ENCODE measurements at regions of chr11 and their contacts with region 1.

Region 1: GRCh38 chr11:16605894-16606783 is 132.3 kb upstream of the C11orf58 start:
- DNase-seq: peak; percentile 92 to 94
- ATAC-seq: peak; percentile 63 to 69 (median 68)
- H3K4me3 ChIP-seq: peak overlapping the region; percentile 97
- H3K27ac ChIP-seq: peak overlapping the region; percentile 98
- H3K4me1 ChIP-seq: peaks cover 7% of the 10 kb centered on the region
- H3K27me3 ChIP-seq: no peaks in the 10 kb centered on the region
- CTCF ChIP-seq: peak; percentile 99

Region 2: DNA sequence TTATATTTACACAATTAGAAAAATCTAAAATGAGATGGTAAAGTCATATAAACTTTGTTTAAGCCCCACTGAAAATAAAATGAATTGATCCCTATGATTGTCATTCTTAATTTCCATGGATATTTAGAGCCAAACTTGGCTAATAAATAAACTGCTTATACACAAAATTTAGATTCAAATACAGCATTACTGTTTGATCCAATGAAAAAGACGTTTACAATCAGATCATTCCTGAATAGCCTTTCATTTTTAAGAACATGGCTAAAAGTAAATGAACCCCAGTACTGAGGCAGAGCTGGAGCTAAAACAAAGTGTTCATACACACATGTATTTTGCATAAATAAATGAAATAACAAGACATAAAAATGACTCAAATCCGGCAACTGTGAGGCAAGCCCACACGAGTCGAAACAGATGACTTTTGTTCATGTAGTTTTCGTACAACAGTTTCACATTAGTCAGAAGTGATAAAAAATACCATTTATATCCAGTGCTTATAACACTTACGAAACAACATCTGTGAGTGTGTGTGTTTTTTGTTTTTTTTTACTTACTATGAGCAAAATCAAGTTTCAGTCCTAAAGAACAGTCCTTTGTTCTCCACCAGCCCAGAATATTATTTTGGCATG is 636.3 kb before region 1 on chr11:
- intact Hi-C with region 1: loop called in 1 of 2 experiments (anchors 5 kb)
- DNase-seq: no peak
- ATAC-seq: no peak
- H3K4me3 ChIP-seq: peak overlapping the region; percentile 55
- H3K27ac ChIP-seq: peak overlapping the region; percentile 95
- H3K4me1 ChIP-seq: peaks cover 53% of the 10 kb centered on the region
- H3K27me3 ChIP-seq: no peaks in the 10 kb centered on the region
- CTCF ChIP-seq: no peak

Region 3: GRCh38 chr11:16184588-16184987 is 421.6 kb before region 1 on chr11:
- intact Hi-C with region 1: loop called (anchors 2 to 5 kb)
- DNase-seq: no peak
- ATAC-seq: peak; percentile 62 to 88 (median 81)
- H3K4me3 ChIP-seq: no peak overlapping the region
- H3K27ac ChIP-seq: peak overlapping the region; percentile 83
- H3K4me1 ChIP-seq: peaks cover 32% of the 10 kb centered on the region
- H3K27me3 ChIP-seq: no peaks in the 10 kb centered on the region
- CTCF ChIP-seq: no peak

Region 4: DNA sequence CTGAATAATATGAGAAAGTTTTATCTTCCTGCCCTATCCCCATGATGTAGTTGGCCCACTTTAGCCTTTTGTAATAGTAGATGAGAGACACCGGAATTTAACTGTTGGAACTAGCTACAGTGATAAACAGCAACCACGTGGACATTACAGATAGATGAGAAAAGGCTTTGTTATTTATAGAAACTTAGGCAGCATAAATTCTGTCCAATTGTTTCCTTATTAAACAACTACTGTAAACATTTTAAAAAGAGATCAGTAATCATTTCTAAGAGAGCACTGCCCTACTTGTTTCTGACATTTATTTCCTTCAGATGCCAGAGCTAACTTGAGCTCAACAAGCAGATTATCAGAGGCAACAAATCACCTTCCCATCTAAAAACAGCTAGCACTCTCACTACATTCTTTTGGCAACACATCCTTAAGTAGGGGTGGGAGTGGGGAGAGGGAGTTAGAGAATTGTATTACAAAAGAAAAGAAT is 312.9 kb before region 1 on chr11:
- intact Hi-C with region 1: loop called (anchors 1 to 10 kb)
- DNase-seq: no peak
- ATAC-seq: peak; percentile 72 to 89 (median 81)
- H3K4me3 ChIP-seq: peak overlapping the region; percentile 35
- H3K27ac ChIP-seq: peak overlapping the region; percentile 84
- H3K4me1 ChIP-seq: peaks cover 65% of the 10 kb centered on the region
- H3K27me3 ChIP-seq: no peaks in the 10 kb centered on the region
- CTCF ChIP-seq: no peak

Region 5: GRCh38 chr11:16347928-16348685 is 258.0 kb before region 1 on chr11:
- intact Hi-C with region 1: loop called (anchors 1 to 5 kb)
- DNase-seq: no peak
- ATAC-seq: peak; percentile 77 to 92 (median 87)
- H3K4me3 ChIP-seq: peak overlapping the region; percentile 45
- H3K27ac ChIP-seq: peak overlapping the region; percentile 83
- H3K4me1 ChIP-seq: peaks cover 37% of the 10 kb centered on the region
- H3K27me3 ChIP-seq: no peaks in the 10 kb centered on the region
- CTCF ChIP-seq: no peak

Region 6: DNA sequence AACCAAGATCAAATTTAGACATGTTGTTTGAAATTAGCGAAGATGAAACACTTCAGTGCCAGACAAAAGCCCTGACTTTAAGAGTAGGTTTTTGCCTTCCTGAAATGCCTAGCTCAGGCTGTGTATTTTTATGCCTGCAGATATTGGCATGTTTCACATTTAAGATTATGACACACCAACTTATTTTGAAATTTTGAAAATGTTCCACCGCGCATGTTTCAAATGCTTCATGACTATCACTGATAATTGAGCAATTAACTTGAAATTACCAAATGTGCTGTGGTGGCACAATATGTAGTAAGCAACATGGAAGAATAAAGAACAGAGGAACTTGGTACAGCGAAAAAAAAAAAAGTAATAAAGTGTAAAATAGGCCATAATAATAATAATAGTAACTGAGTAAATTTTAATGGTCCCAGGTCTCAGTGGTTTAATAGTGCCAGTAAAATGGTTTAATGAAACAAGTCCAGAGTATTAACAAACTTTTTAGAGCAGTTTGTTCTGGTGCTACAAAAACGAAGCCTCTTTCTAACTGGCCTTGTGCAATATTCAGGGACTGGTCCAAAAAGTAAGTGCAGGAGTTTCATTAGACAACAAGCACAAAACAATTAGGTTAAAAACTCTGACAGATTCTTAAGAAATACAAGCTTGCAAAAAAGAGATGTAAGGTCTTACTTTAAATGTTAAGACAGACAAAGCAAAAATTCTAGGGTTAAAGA is 137.2 kb before region 1 on chr11:
- intact Hi-C with region 1: loop called in 1 of 2 experiments (anchors 10 kb)
- DNase-seq: no peak
- ATAC-seq: peak; percentile 38 to 86 (median 60)
- H3K4me3 ChIP-seq: peak overlapping the region; percentile 8
- H3K27ac ChIP-seq: peak overlapping the region; percentile 57
- H3K4me1 ChIP-seq: peaks cover 36% of the 10 kb centered on the region
- H3K27me3 ChIP-seq: no peaks in the 10 kb centered on the region
- CTCF ChIP-seq: no peak

Region 7: DNA sequence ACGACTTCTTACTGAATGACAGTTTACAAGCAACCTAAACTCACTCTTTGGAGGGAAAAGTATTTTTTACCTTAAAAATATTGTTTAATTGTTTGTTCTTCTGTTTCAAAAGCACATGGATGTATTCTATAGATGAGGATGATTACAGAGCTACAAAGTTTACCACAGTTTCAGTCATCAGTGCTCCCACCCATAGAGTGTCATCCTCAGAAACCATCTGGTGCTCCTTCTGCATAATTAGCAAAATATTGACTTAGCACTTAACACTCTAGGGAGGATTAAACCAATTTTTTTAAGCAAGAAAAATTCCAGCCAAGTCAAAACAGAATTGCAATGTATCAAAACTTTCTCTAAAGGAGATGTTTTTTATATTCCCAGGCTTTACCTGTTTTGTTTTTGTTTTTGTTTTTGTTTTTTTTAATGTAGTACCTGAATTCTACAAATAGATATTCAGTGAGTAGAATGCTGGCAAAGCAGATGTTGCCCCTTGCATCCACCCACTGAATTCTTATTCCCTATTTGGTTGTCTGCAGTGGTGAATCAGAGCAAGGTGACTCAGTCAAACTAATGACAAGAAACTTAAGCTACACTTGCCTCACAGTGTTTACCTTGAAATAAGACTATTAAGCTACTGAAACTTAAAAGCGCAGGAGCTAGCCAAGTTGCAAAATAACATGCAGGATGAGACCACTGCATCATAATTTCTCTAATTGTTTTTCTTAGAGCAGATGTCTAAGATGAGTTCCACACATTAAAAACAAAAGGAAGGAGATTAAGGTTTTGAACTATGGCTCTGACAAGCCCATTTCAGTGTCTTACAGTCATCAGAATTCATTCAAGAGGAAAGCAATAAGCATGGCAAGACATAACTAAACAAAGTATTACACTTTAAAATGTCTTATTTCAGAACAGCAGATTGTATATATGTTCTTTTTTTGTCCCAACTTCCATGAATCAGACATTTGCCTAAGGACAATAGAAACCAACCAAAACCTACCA is 94.7 kb before region 1 on chr11:
- intact Hi-C with region 1: loop called in 1 of 2 experiments (anchors 5 kb)
- DNase-seq: no peak
- ATAC-seq: peak; percentile 83 to 93 (median 90)
- H3K4me3 ChIP-seq: no peak overlapping the region
- H3K27ac ChIP-seq: peak overlapping the region; percentile 82
- H3K4me1 ChIP-seq: peaks cover 39% of the 10 kb centered on the region
- H3K27me3 ChIP-seq: no peaks in the 10 kb centered on the region
- CTCF ChIP-seq: no peak

Region 8: GRCh38 chr11:16561150-16561549 is 45.0 kb before region 1 on chr11:
- intact Hi-C with region 1: no loop called
- DNase-seq: no peak
- ATAC-seq: no peak
- H3K4me3 ChIP-seq: no peak overlapping the region
- H3K27ac ChIP-seq: peak overlapping the region; percentile 31
- H3K4me1 ChIP-seq: peaks cover 44% of the 10 kb centered on the region
- H3K27me3 ChIP-seq: no peaks in the 10 kb centered on the region
- CTCF ChIP-seq: no peak

Region 9: GRCh38 chr11:16669799-16670415 is 63.8 kb after region 1 on chr11:
- intact Hi-C with region 1: no loop called
- DNase-seq: no peak
- ATAC-seq: no peak
- H3K4me3 ChIP-seq: no peak overlapping the region
- H3K27ac ChIP-seq: no peak overlapping the region
- H3K4me1 ChIP-seq: no peaks in the 10 kb centered on the region
- H3K27me3 ChIP-seq: no peaks in the 10 kb centered on the region
- CTCF ChIP-seq: no peak

Region 10: GRCh38 chr11:16703795-16704194 is 97.7 kb after region 1 on chr11:
- intact Hi-C with region 1: no loop called
- DNase-seq: no peak
- ATAC-seq: no peak
- H3K4me3 ChIP-seq: no peak overlapping the region
- H3K27ac ChIP-seq: no peak overlapping the region
- H3K4me1 ChIP-seq: no peaks in the 10 kb centered on the region
- H3K27me3 ChIP-seq: no peaks in the 10 kb centered on the region
- CTCF ChIP-seq: no peak

Region 11: DNA sequence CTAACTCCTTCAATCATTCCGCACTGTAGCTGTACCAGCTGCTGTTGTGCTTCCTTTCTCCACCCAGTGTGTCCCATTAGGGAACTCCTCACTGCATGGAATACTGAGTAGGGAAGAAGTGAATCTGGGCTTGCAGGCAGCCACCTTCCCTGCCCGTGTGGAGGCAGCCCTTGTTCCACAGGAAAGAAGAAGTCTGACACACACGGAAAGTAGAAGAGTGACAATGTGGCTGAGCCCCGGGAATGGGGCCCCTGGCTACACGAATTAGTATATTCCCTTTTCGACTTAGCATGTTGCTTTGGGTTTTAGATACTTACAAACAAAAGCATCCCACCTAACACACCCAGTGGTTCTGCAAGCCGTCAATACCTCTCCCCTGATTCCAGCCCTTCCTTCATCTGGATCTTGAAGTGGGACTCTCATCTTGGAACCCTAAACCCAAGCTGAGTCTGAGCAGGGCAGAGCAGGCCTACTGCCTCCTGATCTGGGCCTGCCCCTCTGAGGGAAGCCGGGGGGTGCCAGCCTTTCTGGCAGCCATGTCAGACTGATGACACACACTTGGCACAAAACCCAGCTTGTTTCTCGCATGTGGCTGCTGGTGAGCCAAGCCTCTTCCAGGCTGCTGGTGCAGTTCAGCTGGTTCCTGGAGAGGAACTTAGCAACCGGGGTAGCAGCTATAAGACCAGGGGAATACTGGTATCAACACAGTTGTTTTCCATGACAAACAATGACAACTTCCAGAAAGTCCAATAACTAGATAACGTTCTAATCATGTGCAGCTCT is 203.9 kb after region 1 on chr11:
- intact Hi-C with region 1: no loop called
- DNase-seq: peak in 1 of 2 donors; percentile 43
- ATAC-seq: peak; percentile 44 to 63 (median 52)
- H3K4me3 ChIP-seq: no peak overlapping the region
- H3K27ac ChIP-seq: no peak overlapping the region
- H3K4me1 ChIP-seq: peaks cover 4% of the 10 kb centered on the region
- H3K27me3 ChIP-seq: no peaks in the 10 kb centered on the region
- CTCF ChIP-seq: no peak

Measured in psoas muscle (tissue), 8 donors.